ENCODE measurements at regions of chr11 and their contacts with region 1.

Region 1: DNA sequence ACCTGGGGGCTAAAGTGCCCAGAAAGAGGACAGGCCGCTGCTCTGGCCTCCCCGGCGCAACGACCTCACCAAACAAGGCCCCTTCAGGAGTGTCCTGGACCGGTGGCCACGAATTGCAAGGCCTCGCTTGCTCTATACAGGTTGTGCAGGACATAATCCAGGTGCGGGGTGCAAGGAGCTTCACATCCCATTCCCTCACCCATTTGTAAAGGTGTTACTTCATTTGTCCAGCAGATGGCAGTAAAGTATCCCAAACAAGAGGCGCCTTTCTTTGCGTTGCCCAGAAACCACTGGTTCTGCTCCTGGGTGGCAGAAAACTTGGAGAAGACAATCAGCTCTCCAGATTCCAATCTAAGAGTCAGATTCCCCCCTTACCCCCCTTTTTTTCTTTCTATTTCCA is 35.9 kb upstream of the PRDM11 start:
- DNase-seq: no peak
- ATAC-seq: peak; percentile 89
- H3K4me3 ChIP-seq: no peak overlapping the region
- H3K27ac ChIP-seq: no peak overlapping the region
- H3K4me1 ChIP-seq: no peaks in the 10 kb centered on the region
- H3K27me3 ChIP-seq: peaks cover 36% of the 10 kb centered on the region
- CTCF ChIP-seq: peak; percentile 77

Region 2: GRCh38 chr11:45298718-45299117 is 188.2 kb after region 1 on chr11:
- intact Hi-C with region 1: loop called (anchors 5 kb)
- DNase-seq: no peak
- ATAC-seq: no peak
- H3K4me3 ChIP-seq: no peak overlapping the region
- H3K27ac ChIP-seq: no peak overlapping the region
- H3K4me1 ChIP-seq: no peaks in the 10 kb centered on the region
- H3K27me3 ChIP-seq: no peaks in the 10 kb centered on the region
- CTCF ChIP-seq: no peak

Region 3: GRCh38 chr11:45332276-45332934 is 221.8 kb after region 1 on chr11:
- intact Hi-C with region 1: loop called (anchors 5 kb)
- DNase-seq: no peak
- ATAC-seq: peak; percentile 84
- H3K4me3 ChIP-seq: peak overlapping the region; percentile 27
- H3K27ac ChIP-seq: peak overlapping the region; percentile 65
- H3K4me1 ChIP-seq: peaks cover 12% of the 10 kb centered on the region
- H3K27me3 ChIP-seq: no peaks in the 10 kb centered on the region
- CTCF ChIP-seq: peak; percentile 80

Region 4: GRCh38 chr11:45354976-45355705 is 244.6 kb after region 1 on chr11:
- intact Hi-C with region 1: no loop called
- DNase-seq: peak; percentile 89
- ATAC-seq: peak; percentile 94
- H3K4me3 ChIP-seq: peak overlapping the region; percentile 57
- H3K27ac ChIP-seq: peak overlapping the region; percentile 44
- H3K4me1 ChIP-seq: no peaks in the 10 kb centered on the region
- H3K27me3 ChIP-seq: peaks cover 3% of the 10 kb centered on the region
- CTCF ChIP-seq: no peak

Measured in upper lobe of right lung (tissue), 1 donor.